ENCODE measurements at regions of chr6 and their contacts with region 1.

Region 1: DNA sequence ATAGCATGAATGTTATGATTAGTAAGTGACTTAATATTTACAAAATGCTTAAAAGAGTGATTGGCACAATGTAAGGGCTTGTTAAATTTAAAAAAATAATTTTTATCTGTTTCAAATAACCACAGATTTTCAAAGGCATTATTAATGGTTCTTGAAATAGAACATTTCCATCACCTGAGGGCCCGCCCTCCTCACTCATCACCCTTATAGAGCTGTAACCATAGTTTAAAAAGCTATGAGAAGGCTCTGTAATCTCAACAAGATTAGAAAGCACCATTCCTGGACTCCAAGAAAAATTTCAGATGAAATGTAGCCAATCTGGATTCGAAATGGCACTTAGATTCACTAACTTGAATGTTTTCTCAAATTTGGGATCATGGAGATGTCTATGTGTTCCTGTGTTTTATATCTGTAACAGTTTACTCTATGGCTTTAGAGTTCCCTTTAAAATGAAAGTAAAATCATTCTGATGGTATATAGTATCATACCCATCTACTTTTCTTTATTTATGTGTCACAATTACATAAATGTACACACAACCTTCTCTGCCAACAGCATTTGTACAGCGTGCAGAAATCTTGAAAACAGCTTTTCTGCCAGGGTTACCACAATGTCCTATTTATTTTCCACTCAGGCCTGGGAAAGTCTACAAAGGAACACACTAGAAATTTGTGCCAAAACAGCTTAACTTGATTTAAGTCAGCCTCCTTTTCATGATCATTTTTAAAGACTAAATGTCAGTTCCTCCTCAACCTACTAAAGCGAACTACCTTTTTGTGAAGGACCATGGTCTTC is 207.7 kb downstream of the TBX18 start:
- DNase-seq: no peak
- ATAC-seq: peak; percentile 36
- H3K4me3 ChIP-seq: no peak overlapping the region
- H3K27ac ChIP-seq: no peak overlapping the region
- H3K4me1 ChIP-seq: no peaks in the 10 kb centered on the region
- H3K27me3 ChIP-seq: no peaks in the 10 kb centered on the region
- CTCF ChIP-seq: no peak
- EP300 ChIP-seq: no peak
- POLR2A ChIP-seq: no peak
- RAD21 ChIP-seq: no peak

Region 2: DNA sequence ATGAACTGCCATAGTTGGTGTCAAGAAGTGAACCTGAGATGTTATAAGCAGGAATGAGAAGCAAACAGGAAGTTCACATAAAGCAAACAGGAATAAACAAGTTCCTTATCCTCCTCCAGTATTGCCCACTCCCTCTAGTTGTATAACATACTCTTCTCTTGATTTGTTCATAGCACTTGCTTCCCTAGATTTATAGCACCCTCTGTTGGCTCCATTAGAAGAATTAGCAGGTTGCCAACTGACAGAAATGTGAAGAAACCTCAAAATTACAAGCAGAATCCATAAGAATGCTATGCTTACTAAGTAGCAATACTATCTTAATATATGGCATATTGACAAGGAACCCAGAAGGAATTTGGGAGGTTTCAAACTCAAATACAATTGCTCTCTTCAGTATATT is 12.2 kb after region 1 on chr6:
- CTCF ChIA-PET with region 1: interaction called, 9 read pairs
- POLR2A ChIA-PET with region 1: interaction called, 10 read pairs
- RAD21 ChIA-PET with region 1: interaction called, 5 read pairs
- SMC1A ChIA-PET with region 1: interaction called, 5 read pairs
- in situ Hi-C with region 1: no loop called
- intact Hi-C with region 1: no loop called
- DNase-seq: no peak
- ATAC-seq: peak; percentile 58; the same call in 2 of the 3 replicates
- H3K4me3 ChIP-seq: no peak overlapping the region
- H3K27ac ChIP-seq: no peak overlapping the region
- H3K4me1 ChIP-seq: no peaks in the 10 kb centered on the region
- H3K27me3 ChIP-seq: no peaks in the 10 kb centered on the region
- CTCF ChIP-seq: peak in 2 of 3 experiments; percentile 10 to 41; a peak in 2 of 6 replicates
- EP300 ChIP-seq: no peak
- POLR2A ChIP-seq: no peak
- RAD21 ChIP-seq: peak; percentile 51